Dorsolateral prefrontal cortex (tissue), 120 donors: ENCODE measurements at regions of chr12 and their contacts with region 1.

Region 1: GRCh38 chr12:3034067-3034750 is 43.0 kb upstream of the TSPAN9 start:
- DNase-seq: peak; percentile 63 to 79 (median 78)
- H3K4me3 ChIP-seq: no peak overlapping the region
- H3K27ac ChIP-seq: peak overlapping the region in 32 of 59 donors; percentile 14 to 100 (median 94)
- H3K27me3 ChIP-seq: no peaks in the 10 kb centered on the region
- CTCF ChIP-seq: peak; percentile 25 to 82 (median 72)

Region 2: DNA sequence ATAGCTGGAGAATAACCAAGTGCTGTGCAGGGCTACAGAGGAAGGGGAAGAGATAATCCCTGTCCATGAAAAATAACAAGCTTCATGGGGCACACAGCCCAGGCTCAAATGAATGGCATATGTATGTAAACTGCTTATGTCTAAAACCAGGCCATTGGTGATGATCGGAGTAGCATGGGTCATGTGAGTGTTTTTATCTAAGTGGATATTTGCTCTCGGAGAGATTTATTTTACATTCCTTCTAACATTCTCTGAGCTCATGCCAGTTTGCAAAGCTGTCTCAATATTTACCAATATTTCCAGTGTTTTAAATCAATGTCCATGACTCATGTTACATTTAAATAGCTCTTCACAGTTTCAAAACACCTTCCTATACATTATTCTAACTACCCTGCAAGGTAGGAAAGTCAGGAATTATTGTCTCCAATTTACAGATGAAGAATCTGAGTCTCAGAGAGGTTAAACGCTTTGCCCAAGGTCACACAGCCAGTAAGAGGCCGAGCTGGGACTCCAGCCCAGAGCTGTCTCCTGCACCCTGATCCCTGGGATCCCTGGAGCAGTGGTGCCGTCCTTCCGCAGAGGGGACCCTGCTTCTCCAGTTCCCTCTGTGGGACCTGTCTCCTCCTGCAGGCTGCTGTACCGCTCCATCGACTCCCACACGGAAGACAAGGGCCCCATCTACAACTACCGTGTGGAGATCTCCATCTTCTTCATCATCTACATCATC is 426.2 kb before region 1 on chr12:
- intact Hi-C with region 1: no loop called
- DNase-seq: no peak
- H3K4me3 ChIP-seq: no peak overlapping the region
- H3K27ac ChIP-seq: peak overlapping the region in 21 of 59 donors; percentile 6 to 75 (median 41)
- H3K27me3 ChIP-seq: no peaks in the 10 kb centered on the region
- CTCF ChIP-seq: no peak

Region 3: GRCh38 chr12:2794736-2795289 is 239.4 kb before region 1 on chr12 and contains the start of gene FKBP4:
- intact Hi-C with region 1: loop called in 1 of 2 experiments (anchors 5 kb)
- DNase-seq: peak; percentile 85 to 97 (median 94)
- H3K4me3 ChIP-seq: peak within 1 kb of the TSS; percentile 59 to 99 (median 82)
- H3K27ac ChIP-seq: peak within 1 kb of the TSS; percentile 88 to 100 (median 98)
- H3K27me3 ChIP-seq: no peaks in the 10 kb centered on the region
- CTCF ChIP-seq: peak in 13 of 56 donors; percentile 5 to 38 (median 12)
- total RNA-seq, gene FKBP4: 73.3 to 450 (median 131) TPM

Region 4: GRCh38 chr12:2845280-2845679 is 188.9 kb before region 1 on chr12:
- intact Hi-C with region 1: loop called (anchors 5 to 10 kb)
- DNase-seq: no peak
- H3K4me3 ChIP-seq: no peak overlapping the region
- H3K27ac ChIP-seq: peak overlapping the region in 3 of 59 donors; percentile 26 to 61 (median 42)
- H3K27me3 ChIP-seq: no peaks in the 10 kb centered on the region
- CTCF ChIP-seq: no peak

Region 5: DNA sequence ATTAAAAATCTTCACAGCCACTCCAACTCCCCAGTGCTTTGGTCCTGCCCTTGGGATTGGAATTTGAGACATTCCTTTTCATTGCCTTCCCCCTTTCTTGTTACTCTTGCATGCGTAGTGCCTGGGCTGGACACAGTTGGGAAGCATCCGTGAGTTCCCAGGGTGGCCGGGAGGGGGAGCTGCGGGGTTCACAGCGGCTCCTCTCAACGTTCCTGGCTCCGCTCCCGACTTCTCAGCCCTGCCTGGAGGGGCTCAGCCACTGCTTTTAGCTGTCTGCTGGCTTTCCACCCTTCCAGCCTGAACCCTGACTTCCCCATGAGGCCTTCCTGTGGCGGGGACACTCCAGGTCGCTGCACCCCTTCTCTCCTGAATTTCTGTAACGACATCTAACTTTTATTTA is 180.6 kb before region 1 on chr12:
- intact Hi-C with region 1: loop called (anchors 5 to 10 kb)
- DNase-seq: peak; percentile 77 to 88 (median 84)
- H3K4me3 ChIP-seq: peak overlapping the region in 3 of 59 donors; percentile 16 to 38 (median 24)
- H3K27ac ChIP-seq: peak overlapping the region in 1 of 59 donors; percentile 19
- H3K27me3 ChIP-seq: no peaks in the 10 kb centered on the region
- CTCF ChIP-seq: peak; percentile 39 to 90 (median 83)

Region 6: DNA sequence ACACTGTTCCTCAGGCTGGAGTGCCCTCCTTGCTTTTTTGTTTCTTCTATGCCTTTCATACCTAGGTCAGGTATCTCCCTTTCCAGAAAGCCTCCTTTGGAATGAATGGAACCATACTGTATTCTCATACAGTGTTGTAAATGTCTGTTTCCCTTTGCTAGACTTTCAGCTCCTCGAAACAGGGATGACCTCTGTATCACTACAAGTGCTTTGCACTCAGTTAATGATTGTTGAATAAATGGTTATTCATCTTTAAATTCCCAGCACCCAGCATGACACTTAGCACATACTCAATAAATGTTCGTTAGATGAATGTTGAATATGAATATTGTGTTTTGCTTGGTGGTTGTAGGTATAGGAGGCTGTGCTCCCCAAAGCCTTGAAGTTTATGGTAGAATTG is 149.4 kb before region 1 on chr12:
- intact Hi-C with region 1: loop called (anchors 2 to 5 kb)
- DNase-seq: no peak
- H3K4me3 ChIP-seq: no peak overlapping the region
- H3K27ac ChIP-seq: peak overlapping the region in 32 of 59 donors; percentile 4 to 72 (median 38)
- H3K27me3 ChIP-seq: no peaks in the 10 kb centered on the region
- CTCF ChIP-seq: no peak

Region 7: GRCh38 chr12:2930865-2931264 is 103.3 kb before region 1 on chr12:
- intact Hi-C with region 1: no loop called
- DNase-seq: no peak
- H3K4me3 ChIP-seq: no peak overlapping the region
- H3K27ac ChIP-seq: no peak overlapping the region
- H3K27me3 ChIP-seq: no peaks in the 10 kb centered on the region
- CTCF ChIP-seq: no peak

Region 8: GRCh38 chr12:2944401-2945047 is 89.7 kb before region 1 on chr12:
- intact Hi-C with region 1: loop called (anchors 5 to 10 kb)
- DNase-seq: peak; percentile 30 to 86 (median 60)
- H3K4me3 ChIP-seq: peak overlapping the region in 9 of 59 donors; percentile 2 to 41 (median 14)
- H3K27ac ChIP-seq: peak overlapping the region in 13 of 59 donors; percentile 7 to 73 (median 45)
- H3K27me3 ChIP-seq: no peaks in the 10 kb centered on the region
- CTCF ChIP-seq: peak; percentile 48 to 91 (median 78)